Activated T-helper 1 cell treated with anti-CD3 and anti-CD28 coated beads, Interleukin-12 subunit alpha, Interleukin-12 subunit beta, Interleukin-2, Interleukin-4 antibody, amounts not matched to agents 30 ng/mL and 10 ng/mL and 1 ng/mL, durations not matched to agents 14 hours and 24 hours and 36 hours (primary cell): ENCODE measurements at regions of chr1 and their contacts with region 1.

Region 1: DNA sequence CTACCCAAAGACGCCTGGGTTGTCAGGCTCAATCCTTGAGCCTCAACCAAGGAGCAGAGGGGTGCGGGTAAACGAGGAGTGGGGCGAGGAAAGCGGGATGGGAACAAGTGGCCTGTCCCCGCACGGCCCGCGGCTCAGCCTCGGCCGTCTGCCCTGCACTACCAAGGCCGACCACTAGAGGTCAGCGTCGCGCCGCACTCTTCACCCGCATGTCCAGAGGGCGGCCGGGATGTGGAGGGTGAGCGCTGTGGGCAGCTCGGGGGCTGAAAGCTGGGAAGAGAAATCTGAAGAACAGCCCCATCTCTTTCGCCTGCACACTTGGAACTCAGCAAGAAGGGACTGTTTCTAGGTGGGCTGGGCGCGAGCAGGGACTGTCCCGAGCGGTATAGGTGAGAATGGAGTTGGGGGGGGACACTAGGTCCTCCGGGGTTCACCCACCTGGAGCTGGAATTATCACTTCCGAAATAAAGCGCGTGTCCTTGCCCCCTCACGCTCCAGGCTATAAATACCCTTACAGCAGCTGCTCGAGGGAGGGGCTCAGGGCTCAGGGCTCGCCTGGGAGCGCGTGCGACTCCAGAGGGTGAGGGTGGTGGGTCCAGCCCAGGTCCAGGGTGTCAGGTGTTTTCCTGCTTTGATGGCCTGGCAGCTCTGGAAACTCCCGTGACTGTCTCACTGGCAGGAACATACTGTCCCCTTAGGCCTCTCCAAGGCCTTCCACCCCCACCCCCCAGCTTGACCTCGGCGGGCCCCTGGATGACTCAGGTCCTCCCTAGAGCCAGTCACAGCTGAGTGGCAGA is 9.8 kb downstream of the SLC30A2 start:
- DNase-seq: peak; percentile 74
- H3K4me3 Mint-ChIP-seq: peak overlapping the region; percentile 91
- H3K27ac Mint-ChIP-seq: peak overlapping the region; percentile 56
- H3K4me1 Mint-ChIP-seq: peaks cover 17% of the 10 kb centered on the region
- H3K27me3 Mint-ChIP-seq: peaks cover 29% of the 10 kb centered on the region

Region 2: DNA sequence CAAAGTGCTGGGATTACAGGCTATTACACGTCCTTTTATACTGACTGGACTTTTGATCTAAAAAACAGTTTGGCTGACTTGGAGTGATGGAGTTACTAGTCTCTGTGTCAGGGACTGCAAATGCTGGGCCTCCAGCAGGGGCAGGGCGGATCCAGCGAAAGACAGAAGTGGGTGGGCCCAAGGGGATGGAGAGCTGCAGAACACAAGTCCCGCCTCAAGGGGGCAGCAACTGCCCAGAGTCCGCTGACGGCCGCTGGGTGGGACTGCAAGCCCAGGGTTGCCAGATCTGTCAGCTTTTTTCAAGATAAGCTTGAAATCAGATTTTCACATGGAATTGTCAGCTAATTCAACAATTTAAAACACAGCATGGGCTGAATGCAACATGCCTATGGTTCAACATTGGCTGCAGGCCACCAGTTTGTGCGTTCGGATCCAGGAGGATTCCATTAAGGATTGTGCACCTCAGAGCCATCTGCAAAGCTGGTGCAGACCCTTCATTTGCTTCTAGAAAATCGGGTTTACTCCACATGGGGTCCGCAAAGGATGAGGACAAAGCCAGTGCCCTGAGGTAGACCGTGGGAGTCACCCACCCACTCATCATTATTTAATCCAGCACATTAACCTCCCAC is 140.7 kb before region 1 on chr1:
- intact Hi-C with region 1: loop called (anchors 2 kb)
- DNase-seq: peak; percentile 85
- H3K4me3 Mint-ChIP-seq: no peak overlapping the region
- H3K27ac Mint-ChIP-seq: peak overlapping the region; percentile 40
- H3K4me1 Mint-ChIP-seq: peaks cover 34% of the 10 kb centered on the region
- H3K27me3 Mint-ChIP-seq: no peaks in the 10 kb centered on the region

Region 3: GRCh38 chr1:26102526-26102925 is 66.4 kb after region 1 on chr1:
- intact Hi-C with region 1: loop called (anchors 1 kb)
- DNase-seq: no peak
- H3K4me3 Mint-ChIP-seq: no peak overlapping the region
- H3K27ac Mint-ChIP-seq: no peak overlapping the region
- H3K4me1 Mint-ChIP-seq: peaks cover 14% of the 10 kb centered on the region
- H3K27me3 Mint-ChIP-seq: peaks cover 9% of the 10 kb centered on the region

Region 4: GRCh38 chr1:26145041-26145959 is 109.1 kb after region 1 on chr1:
- intact Hi-C with region 1: loop called (anchors 1 kb)
- DNase-seq: peak; percentile 66
- H3K4me3 Mint-ChIP-seq: no peak overlapping the region
- H3K27ac Mint-ChIP-seq: no peak overlapping the region
- H3K4me1 Mint-ChIP-seq: peaks cover 8% of the 10 kb centered on the region
- H3K27me3 Mint-ChIP-seq: peaks cover 24% of the 10 kb centered on the region

Region 5: GRCh38 chr1:26306290-26307229 is 270.4 kb after region 1 on chr1 and contains the start of gene UBXN11:
- intact Hi-C with region 1: loop called (anchors 2 kb)
- DNase-seq: peak; percentile 92
- H3K4me3 Mint-ChIP-seq: peak within 1 kb of the TSS; percentile 99
- H3K27ac Mint-ChIP-seq: peak within 1 kb of the TSS; percentile 95
- H3K4me1 Mint-ChIP-seq: peaks cover 41% of the 10 kb centered on the region
- H3K27me3 Mint-ChIP-seq: no peaks in the 10 kb centered on the region
- total RNA-seq, gene UBXN11: 14.8 and 22.1 TPM in 2 replicates